Pancreas (tissue), 10 donors: ENCODE measurements at regions of chr18 and their contacts with region 1.

Region 1: GRCh38 chr18:3593904-3594661 is 144.1 kb downstream of the TGIF1 start:
- DNase-seq: peak in 5 of 6 donors; percentile 79 to 91 (median 86)
- ATAC-seq: peak; percentile 74 to 86 (median 82)
- H3K4me3 ChIP-seq: peak overlapping the region; percentile 6 to 48 (median 20)
- H3K27ac ChIP-seq: peak overlapping the region; percentile 95 to 99 (median 96)
- H3K4me1 ChIP-seq: peaks cover 7 to 37% (median 29%) of the 10 kb centered on the region in 3 donors
- H3K27me3 ChIP-seq: no peaks in the 10 kb centered on the region
- CTCF ChIP-seq: peak; percentile 71 to 89 (median 72)

Region 2: GRCh38 chr18:3297025-3297984 is 296.8 kb before region 1 on chr18:
- intact Hi-C with region 1: loop called in 1 of 3 experiments (anchors 10 kb)
- DNase-seq: peak; percentile 91 to 98 (median 96)
- ATAC-seq: peak; percentile 81 to 96 (median 92)
- H3K4me3 ChIP-seq: peak overlapping the region; percentile 55 to 86 (median 58)
- H3K27ac ChIP-seq: peak overlapping the region; percentile 65 to 88 (median 72)
- H3K4me1 ChIP-seq: peaks cover 0 to 5% (median 0%) of the 10 kb centered on the region in 3 donors
- H3K27me3 ChIP-seq: no peaks in the 10 kb centered on the region
- CTCF ChIP-seq: peak in 3 of 4 donors; percentile 30 to 44 (median 30)

Region 3: DNA sequence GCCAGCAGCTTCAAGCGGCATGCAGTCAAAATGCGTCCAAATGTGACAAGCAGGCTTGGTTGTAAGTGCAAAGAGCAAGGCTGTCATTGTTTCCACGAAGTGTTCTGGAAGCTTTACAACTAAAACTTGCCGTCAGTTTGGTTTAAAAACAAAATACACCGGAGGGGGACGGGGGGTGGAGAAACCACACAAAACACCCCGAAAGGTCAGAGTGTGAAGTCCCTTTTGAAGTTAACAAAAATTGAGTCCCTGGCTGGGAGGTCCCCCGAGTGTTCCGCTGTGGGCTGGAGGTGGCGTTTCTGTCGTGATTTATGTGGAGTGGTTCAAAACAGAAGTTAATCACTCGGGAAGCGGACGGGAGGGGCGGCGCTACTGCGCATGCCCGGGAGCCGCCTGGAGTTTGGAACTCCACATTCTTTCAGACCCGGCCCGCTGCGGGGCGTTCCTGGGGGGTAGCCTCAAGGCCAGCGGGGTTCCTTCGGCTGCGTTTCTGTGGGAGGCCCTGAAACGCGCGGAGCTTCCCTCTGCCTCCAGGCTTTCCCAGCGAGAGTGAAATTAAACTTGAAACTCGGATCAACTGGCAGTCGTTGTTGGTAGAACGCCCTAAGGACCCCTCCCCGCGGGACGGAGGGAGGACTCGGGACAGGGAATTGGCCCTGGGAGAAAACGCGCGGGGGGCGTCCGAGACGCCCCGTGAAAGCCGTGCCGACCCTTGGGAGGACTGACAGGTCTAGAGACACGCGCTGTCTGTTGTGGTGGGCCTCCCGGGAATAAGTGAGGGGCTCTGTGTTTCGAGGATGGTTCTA is 142.7 kb before region 1 on chr18:
- intact Hi-C with region 1: loop called in 1 of 3 experiments (anchors 5 kb)
- DNase-seq: peak; percentile 87 to 96 (median 90)
- ATAC-seq: peak; percentile 29 to 45 (median 41)
- H3K4me3 ChIP-seq: peak overlapping the region; percentile 78 to 90 (median 80)
- H3K27ac ChIP-seq: peak overlapping the region; percentile 92 to 100 (median 98)
- H3K4me1 ChIP-seq: peaks cover 14 to 28% (median 23%) of the 10 kb centered on the region in 3 donors
- H3K27me3 ChIP-seq: no peaks in the 10 kb centered on the region
- CTCF ChIP-seq: no peak

Region 4: GRCh38 chr18:3525870-3526420 is 68.1 kb before region 1 on chr18:
- intact Hi-C with region 1: no loop called
- DNase-seq: no peak
- ATAC-seq: no peak
- H3K4me3 ChIP-seq: no peak overlapping the region
- H3K27ac ChIP-seq: no peak overlapping the region
- H3K4me1 ChIP-seq: no peaks in the 10 kb centered on the region
- H3K27me3 ChIP-seq: no peaks in the 10 kb centered on the region
- CTCF ChIP-seq: no peak

Region 5: GRCh38 chr18:3665780-3666525 is 71.9 kb after region 1 on chr18:
- intact Hi-C with region 1: loop called in 1 of 3 experiments (anchors 10 kb)
- DNase-seq: peak; percentile 74 to 90 (median 82)
- ATAC-seq: peak; percentile 96 to 97 (median 97)
- H3K4me3 ChIP-seq: peak overlapping the region in 2 of 4 donors; percentile 4 to 22
- H3K27ac ChIP-seq: peak overlapping the region; percentile 51 to 82 (median 64)
- H3K4me1 ChIP-seq: peaks cover 0 to 11% (median 0%) of the 10 kb centered on the region in 3 donors
- H3K27me3 ChIP-seq: no peaks in the 10 kb centered on the region
- CTCF ChIP-seq: peak; percentile 79 to 89 (median 87)

Region 6: DNA sequence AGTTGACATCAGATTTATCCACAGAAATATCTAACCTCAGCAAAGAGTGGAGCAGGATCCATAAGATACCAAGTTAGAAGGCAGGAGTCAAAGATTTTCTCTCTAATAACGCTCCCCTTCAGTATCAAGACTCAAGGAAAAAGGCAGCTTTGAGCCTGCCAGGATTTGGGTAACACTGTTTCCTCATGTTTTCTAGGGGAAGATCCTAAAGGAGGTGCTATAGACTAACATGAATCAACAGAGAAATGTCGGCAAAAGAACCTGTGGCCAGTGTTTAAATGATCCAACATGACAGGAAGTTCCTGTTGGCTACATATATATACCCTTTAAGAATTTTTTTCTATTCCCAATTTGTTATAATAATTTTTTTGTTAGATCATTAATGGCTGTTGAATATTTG is 258.2 kb after region 1 on chr18:
- intact Hi-C with region 1: no loop called
- DNase-seq: no peak
- ATAC-seq: no peak
- H3K4me3 ChIP-seq: no peak overlapping the region
- H3K27ac ChIP-seq: no peak overlapping the region
- H3K4me1 ChIP-seq: no peaks in the 10 kb centered on the region
- H3K27me3 ChIP-seq: peaks cover 0 to 3% (median 0%) of the 10 kb centered on the region in 4 donors
- CTCF ChIP-seq: no peak